PC-9 (cell line): ENCODE measurements at regions of chr7 and their contacts with region 1.

Region 1: DNA sequence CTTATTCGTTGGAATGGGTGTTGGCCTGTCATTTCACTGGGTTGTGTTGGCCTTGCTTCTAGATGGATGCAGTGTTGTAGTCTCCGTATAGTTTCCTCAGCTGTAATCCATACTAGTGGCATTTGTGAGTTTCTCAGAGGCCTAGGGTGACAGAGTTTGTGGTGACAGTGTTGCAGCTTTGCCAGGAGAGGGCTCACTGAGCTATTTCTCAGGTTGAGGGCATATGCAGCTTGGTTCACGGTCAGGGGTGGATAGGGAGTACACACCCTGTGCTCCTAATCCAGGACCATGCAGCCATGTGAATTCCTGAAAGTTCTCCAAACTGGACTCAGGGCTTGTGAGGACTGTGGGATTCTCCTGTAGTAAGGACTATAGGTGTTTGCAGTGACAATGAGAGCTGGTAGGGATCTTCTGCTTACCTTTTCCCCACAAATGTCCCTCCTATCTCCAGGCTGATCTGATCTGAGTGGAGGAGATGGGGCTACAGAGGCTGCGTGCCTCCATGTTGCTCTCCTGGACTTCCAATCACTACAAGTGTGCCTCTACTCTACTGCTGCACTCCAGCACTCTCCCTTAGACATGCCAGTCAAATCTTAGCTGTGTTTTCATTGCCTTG is 229.0 kb downstream of the STK31 start:
- DNase-seq: peak; percentile 25 to 60
- H3K4me3 ChIP-seq: no peak overlapping the region
- H3K27ac ChIP-seq: no peak overlapping the region
- H3K4me1 ChIP-seq: peaks cover 10% of the 10 kb centered on the region; the same call in 1 of the 2 replicates
- H3K27me3 ChIP-seq: no peaks in the 10 kb centered on the region
- CTCF ChIP-seq: peak; percentile 78

Region 2: DNA sequence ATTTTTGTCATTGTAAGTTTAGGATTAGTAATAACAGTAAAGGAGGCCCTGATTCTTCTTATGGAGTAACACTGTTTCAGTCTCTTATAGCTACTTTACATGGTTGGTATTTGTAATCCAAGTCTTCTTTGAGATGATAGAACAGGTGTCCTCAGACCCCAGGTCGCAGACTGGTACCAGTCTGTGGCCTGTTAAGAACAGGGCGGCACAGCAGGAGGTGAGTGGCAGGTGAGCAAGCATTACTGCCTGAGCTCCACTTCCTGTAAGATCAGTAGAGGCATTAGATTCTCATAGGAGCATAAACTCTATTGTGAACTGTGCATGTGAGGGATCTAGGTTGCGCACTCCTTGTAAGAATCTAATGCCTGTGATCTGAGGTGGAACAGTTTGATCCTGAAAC is 151.8 kb before region 1 on chr7:
- CTCF ChIA-PET with region 1: no interaction called
- POLR2A ChIA-PET with region 1: interaction called, 10 read pairs
- intact Hi-C with region 1: no loop called
- DNase-seq: peak in 1 of 2 experiments; percentile 9
- H3K4me3 ChIP-seq: no peak overlapping the region
- H3K27ac ChIP-seq: no peak overlapping the region
- H3K4me1 ChIP-seq: no peaks in the 10 kb centered on the region
- H3K27me3 ChIP-seq: no peaks in the 10 kb centered on the region
- CTCF ChIP-seq: no peak

Region 3: GRCh38 chr7:24381894-24382505 is 443.0 kb after region 1 on chr7:
- CTCF ChIA-PET with region 1: no interaction called
- POLR2A ChIA-PET with region 1: no interaction called
- intact Hi-C with region 1: loop called (anchors 10 kb)
- DNase-seq: peak in 1 of 2 experiments; percentile 54
- H3K4me3 ChIP-seq: no peak overlapping the region
- H3K27ac ChIP-seq: no peak overlapping the region
- H3K4me1 ChIP-seq: peaks cover 20% of the 10 kb centered on the region
- H3K27me3 ChIP-seq: no peaks in the 10 kb centered on the region
- CTCF ChIP-seq: peak; percentile 88

Region 4: DNA sequence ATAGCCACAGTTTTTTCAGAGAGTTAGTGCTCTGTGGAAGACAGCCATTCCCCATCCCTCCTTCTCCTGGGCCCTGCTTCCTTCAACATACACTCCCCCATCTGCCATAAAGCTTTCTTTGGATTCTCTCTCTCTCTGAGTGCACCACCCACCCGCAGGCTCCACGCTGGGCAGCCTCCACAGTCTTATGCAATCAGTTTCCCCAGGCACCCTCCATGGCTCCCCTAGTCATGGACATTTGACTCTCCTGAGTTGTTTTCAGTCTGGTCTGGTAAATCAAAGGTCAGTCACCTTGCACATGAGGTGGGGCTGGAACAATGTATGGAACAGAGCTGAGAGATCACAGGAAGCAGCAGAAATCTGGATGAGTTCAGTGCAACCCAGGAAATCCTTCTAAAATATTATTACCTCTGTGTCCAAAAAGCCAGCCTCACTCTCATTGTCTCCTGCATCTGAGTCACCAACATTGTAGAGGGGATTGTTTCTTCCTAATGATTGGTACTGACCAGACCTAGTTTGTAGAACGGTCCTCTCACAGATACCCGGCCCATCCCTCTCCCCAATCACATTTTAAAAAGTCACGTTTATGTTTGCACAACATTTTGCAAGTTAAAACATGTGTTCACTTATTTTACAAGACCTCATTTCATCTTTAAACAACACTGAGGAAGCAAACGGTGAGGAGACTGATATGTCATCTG is 1115.9 kb after region 1 on chr7:
- CTCF ChIA-PET with region 1: interaction called, 10 read pairs
- POLR2A ChIA-PET with region 1: no interaction called
- intact Hi-C with region 1: no loop called
- DNase-seq: no peak
- H3K4me3 ChIP-seq: no peak overlapping the region
- H3K27ac ChIP-seq: no peak overlapping the region
- H3K4me1 ChIP-seq: no peaks in the 10 kb centered on the region
- H3K27me3 ChIP-seq: no peaks in the 10 kb centered on the region
- CTCF ChIP-seq: no peak